B cell (primary cell): ENCODE measurements at regions of chr6 and their contacts with region 1.

Region 1: DNA sequence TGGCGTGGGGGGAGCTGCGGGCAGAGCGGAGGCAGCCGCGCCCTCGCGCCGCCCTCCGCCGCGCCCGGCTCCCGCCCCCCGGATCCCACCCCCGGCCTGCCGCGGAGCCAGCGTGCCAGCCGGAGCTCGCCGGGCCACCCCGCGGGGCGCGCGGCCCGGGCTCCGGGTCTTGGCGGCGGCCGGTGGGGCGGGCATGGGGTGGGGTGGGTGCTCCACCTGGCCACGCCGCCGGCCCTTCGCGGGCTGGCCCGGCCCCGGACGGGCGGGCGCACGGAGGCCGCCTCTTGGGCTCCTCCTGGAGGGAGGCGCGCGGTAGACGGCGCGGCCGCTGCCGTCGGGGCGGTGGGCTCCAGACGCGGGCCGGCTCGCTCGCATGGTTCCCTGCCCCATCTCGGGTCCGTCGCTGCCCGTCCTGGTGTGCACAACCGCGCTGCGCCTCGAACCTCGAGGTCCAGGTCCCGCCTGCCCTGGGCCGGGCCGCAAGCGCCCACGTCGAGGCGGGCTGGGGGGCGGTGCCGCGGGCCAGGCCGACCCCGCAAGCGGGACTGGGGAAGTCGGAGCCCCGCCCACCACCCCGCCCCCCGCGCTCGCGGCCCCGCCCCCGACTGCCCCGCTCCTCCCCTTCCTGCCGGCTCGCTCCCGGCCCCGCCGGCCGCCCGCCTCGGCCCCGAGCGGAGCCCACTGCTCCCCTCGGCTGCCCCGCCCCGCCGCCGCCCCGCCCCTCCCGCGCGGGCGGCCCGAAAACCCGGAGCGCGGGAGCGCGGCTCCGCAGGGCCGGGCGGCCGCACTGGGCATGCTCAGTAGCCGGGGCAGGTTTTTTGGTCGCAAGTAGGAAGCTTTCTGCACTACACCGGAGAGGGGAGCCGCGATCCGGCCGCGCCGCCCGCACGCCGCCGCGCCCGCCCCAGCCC is at the start of gene CDYL:
- DNase-seq: peak; percentile 94
- ATAC-seq: peak; percentile 74
- H3K4me3 ChIP-seq: peak within 1 kb of the TSS; percentile 51 to 83 (median 72)
- H3K4me3 Mint-ChIP-seq: peak within 1 kb of the TSS; percentile 97
- H3K27ac ChIP-seq: peak within 1 kb of the TSS in 1 of 2 donors; percentile 69
- H3K27ac Mint-ChIP-seq: peak within 1 kb of the TSS; percentile 93
- H3K4me1 ChIP-seq: peaks cover 19 to 26% of the 10 kb centered on the region in 2 donors
- H3K4me1 Mint-ChIP-seq: peaks cover 41% of the 10 kb centered on the region
- H3K27me3 ChIP-seq: no peaks in the 10 kb centered on the region
- H3K27me3 Mint-ChIP-seq: no peaks in the 10 kb centered on the region
- CTCF ChIP-seq: no peak
- total RNA-seq, gene CDYL: 61.0 and 63.0 TPM in 2 replicates

Region 2: GRCh38 chr6:4281341-4282293 is 494.2 kb before region 1 on chr6:
- CTCF ChIA-PET with region 1: interaction called, 3 read pairs
- POLR2A ChIA-PET with region 1: no interaction called
- intact Hi-C with region 1: loop called (anchors 5 kb)
- DNase-seq: peak; percentile 91
- ATAC-seq: peak; percentile 96
- H3K4me3 ChIP-seq: peak overlapping the region in 4 of 5 experiments; percentile 16 to 60 (median 37)
- H3K4me3 Mint-ChIP-seq: peak overlapping the region; percentile 81
- H3K27ac ChIP-seq: no peak overlapping the region
- H3K27ac Mint-ChIP-seq: peak overlapping the region; percentile 83
- H3K4me1 ChIP-seq: peaks cover 9 to 16% of the 10 kb centered on the region in 2 donors
- H3K4me1 Mint-ChIP-seq: peaks cover 13% of the 10 kb centered on the region
- H3K27me3 ChIP-seq: peaks cover 0 to 29% (median 6%) of the 10 kb centered on the region in 4 experiments
- H3K27me3 Mint-ChIP-seq: peaks cover 16% of the 10 kb centered on the region
- CTCF ChIP-seq: peak; percentile 68

Region 3: DNA sequence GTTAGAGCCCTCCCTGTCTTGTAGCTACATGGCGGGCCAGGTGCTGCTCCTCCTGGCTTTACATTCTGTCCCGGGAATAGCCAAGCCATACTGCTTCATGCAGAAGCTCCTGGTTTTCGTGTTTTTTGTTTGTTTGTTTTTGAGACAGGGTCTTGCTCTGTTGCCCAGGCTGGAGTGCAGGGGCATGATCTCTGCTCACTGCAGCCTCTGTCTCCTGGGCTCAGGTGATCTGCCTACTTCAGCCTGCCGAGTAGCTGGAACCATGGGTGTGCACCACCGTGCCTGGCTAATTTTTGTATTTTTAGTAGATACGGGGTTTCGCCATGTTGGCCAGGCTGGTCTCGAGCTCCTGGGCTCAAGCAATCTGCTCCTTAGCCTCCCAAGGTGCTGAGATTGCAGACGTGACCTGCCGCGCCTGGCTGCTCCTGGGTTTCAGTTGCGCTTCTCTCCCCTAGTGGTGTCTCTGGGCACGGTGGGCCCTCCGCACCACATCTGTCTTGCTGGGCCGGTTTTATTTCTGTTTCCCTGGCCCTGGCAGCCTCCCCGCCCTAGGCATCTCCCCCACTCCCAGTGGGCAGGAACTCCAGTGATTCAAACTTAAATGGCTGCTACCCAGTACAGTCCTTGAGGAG is 13.2 kb after region 1 on chr6:
- CTCF ChIA-PET with region 1: interaction called, 12 read pairs
- POLR2A ChIA-PET with region 1: interaction called, 6 read pairs
- intact Hi-C with region 1: loop called (anchors 1 kb)
- DNase-seq: peak; percentile 75
- ATAC-seq: peak; percentile 97
- H3K4me3 ChIP-seq: peak overlapping the region in 3 of 5 experiments; percentile 3 to 12 (median 12)
- H3K4me3 Mint-ChIP-seq: peak overlapping the region; percentile 70
- H3K27ac ChIP-seq: peak overlapping the region in 1 of 2 donors; percentile 44
- H3K27ac Mint-ChIP-seq: peak overlapping the region; percentile 17
- H3K4me1 ChIP-seq: peaks cover 20 to 21% of the 10 kb centered on the region in 2 donors
- H3K4me1 Mint-ChIP-seq: peaks cover 49% of the 10 kb centered on the region
- H3K27me3 ChIP-seq: no peaks in the 10 kb centered on the region
- H3K27me3 Mint-ChIP-seq: no peaks in the 10 kb centered on the region
- CTCF ChIP-seq: peak; percentile 71

Region 4: GRCh38 chr6:4936681-4937041 is 160.8 kb after region 1 on chr6:
- CTCF ChIA-PET with region 1: no interaction called
- POLR2A ChIA-PET with region 1: no interaction called
- intact Hi-C with region 1: loop called (anchors 5 kb)
- DNase-seq: peak; percentile 59
- ATAC-seq: no peak
- H3K4me3 ChIP-seq: no peak overlapping the region
- H3K4me3 Mint-ChIP-seq: no peak overlapping the region
- H3K27ac ChIP-seq: no peak overlapping the region
- H3K27ac Mint-ChIP-seq: peak overlapping the region; percentile 67
- H3K4me1 ChIP-seq: no peaks in the 10 kb centered on the region
- H3K4me1 Mint-ChIP-seq: peaks cover 22% of the 10 kb centered on the region
- H3K27me3 ChIP-seq: no peaks in the 10 kb centered on the region
- H3K27me3 Mint-ChIP-seq: no peaks in the 10 kb centered on the region
- CTCF ChIP-seq: peak; percentile 77

Region 5: DNA sequence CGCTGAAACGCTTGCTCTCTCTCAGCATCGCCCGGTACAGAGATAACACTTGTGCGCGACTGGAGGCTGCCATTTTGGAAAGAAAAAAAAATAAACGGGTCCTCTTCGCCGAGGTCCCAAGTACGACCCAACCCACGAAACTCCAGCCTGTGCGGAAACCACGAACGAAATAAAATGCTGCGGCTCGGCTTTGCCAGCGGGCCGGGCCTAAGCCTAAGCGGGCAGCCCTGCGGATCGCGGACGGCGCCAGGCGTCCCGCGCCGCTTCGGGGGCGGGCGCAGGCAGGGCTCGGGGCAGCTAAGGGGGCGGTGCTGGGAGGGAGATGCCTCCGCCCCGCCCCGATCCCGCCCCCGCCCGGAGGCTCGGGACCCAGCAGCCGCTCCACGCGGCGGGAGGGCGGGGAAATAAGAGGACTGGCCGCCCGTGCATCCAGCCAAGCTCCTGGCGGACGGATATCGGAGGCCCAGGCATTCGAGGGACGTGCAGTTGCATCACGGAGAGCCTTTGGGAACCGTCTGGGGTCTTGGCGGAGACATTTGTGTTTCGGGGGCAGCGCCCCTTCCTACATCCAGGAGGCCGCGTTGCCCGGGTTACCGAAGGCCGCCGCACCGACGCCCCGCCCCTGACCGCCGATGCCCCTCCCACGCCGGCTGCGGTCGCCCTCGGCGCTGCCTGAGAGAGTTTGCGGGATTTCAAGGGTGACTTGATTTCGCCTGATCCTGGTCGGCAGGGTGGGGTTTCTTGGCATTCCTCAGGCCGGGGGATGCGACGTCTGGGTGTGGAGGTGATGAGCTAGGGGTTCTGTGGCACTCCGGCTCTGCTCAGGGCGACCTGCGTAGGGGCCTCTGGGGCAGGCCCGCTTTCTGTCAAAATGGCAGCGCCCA is 485.1 kb after region 1 on chr6 and contains the starts of genes FARS2 and LYRM4:
- CTCF ChIA-PET with region 1: no interaction called
- POLR2A ChIA-PET with region 1: no interaction called
- intact Hi-C with region 1: loop called (anchors 2 kb)
- DNase-seq: peak; percentile 99
- ATAC-seq: peak; percentile 81
- H3K4me3 ChIP-seq: peak within 1 kb of the TSS; percentile 77 to 96 (median 93)
- H3K4me3 Mint-ChIP-seq: peak within 1 kb of the TSS; percentile 92
- H3K27ac ChIP-seq: peak within 1 kb of the TSS; percentile 96 to 97
- H3K27ac Mint-ChIP-seq: peak within 1 kb of the TSS; percentile 99
- H3K4me1 ChIP-seq: peaks cover 15 to 23% of the 10 kb centered on the region in 2 donors
- H3K4me1 Mint-ChIP-seq: peaks cover 24% of the 10 kb centered on the region
- H3K27me3 ChIP-seq: no peaks in the 10 kb centered on the region
- H3K27me3 Mint-ChIP-seq: no peaks in the 10 kb centered on the region
- CTCF ChIP-seq: no peak
- total RNA-seq, gene FARS2: 35.5 TPM in 2 replicates
- total RNA-seq, gene LYRM4: 22.1 and 24.6 TPM in 2 replicates

Region 6: GRCh38 chr6:5995949-5996713 is 1220.3 kb after region 1 on chr6:
- CTCF ChIA-PET with region 1: no interaction called
- POLR2A ChIA-PET with region 1: no interaction called
- intact Hi-C with region 1: loop called (anchors 5 kb)
- DNase-seq: peak; percentile 46
- ATAC-seq: no peak
- H3K4me3 ChIP-seq: peak overlapping the region; percentile 45 to 94 (median 58)
- H3K4me3 Mint-ChIP-seq: peak overlapping the region; percentile 90
- H3K27ac ChIP-seq: no peak overlapping the region
- H3K27ac Mint-ChIP-seq: peak overlapping the region; percentile 74
- H3K4me1 ChIP-seq: peaks cover 53 to 65% of the 10 kb centered on the region in 2 donors
- H3K4me1 Mint-ChIP-seq: peaks cover 43% of the 10 kb centered on the region
- H3K27me3 ChIP-seq: peaks cover 2 to 91% (median 88%) of the 10 kb centered on the region in 4 experiments
- H3K27me3 Mint-ChIP-seq: peaks cover 86% of the 10 kb centered on the region
- CTCF ChIP-seq: no peak